ENCODE measurements at regions of chr14 and their contacts with region 1.

Region 1: GRCh38 chr14:21510735-21511657 is at the start of gene METTL3:
- DNase-seq: peak; percentile 90
- ATAC-seq: peak; percentile 100
- H3K4me3 ChIP-seq: peak within 1 kb of the TSS; percentile 98
- H3K27ac ChIP-seq: peak within 1 kb of the TSS; percentile 95
- H3K4me1 ChIP-seq: peaks cover 9% of the 10 kb centered on the region
- H3K27me3 ChIP-seq: no peaks in the 10 kb centered on the region
- CTCF ChIP-seq: no peak
- total RNA-seq, gene METTL3: 43.3 TPM

Region 2: GRCh38 chr14:21373980-21374379 is 137.0 kb before region 1 on chr14:
- CTCF ChIA-PET with region 1: no interaction called
- POLR2A ChIA-PET with region 1: interaction called, 12 read pairs
- in situ Hi-C with region 1: no loop called
- intact Hi-C with region 1: no loop called
- DNase-seq: no peak
- ATAC-seq: no peak
- H3K4me3 ChIP-seq: no peak overlapping the region
- H3K27ac ChIP-seq: no peak overlapping the region
- H3K4me1 ChIP-seq: no peaks in the 10 kb centered on the region
- H3K27me3 ChIP-seq: no peaks in the 10 kb centered on the region
- CTCF ChIP-seq: no peak

Measured in Panc1 (cell line).